Activated naive CD4-positive, alpha-beta T cell treated with anti-CD3 and anti-CD28 coated beads for 36 hours (primary cell): ENCODE measurements at regions of chr5 and their contacts with region 1.

Region 1: DNA sequence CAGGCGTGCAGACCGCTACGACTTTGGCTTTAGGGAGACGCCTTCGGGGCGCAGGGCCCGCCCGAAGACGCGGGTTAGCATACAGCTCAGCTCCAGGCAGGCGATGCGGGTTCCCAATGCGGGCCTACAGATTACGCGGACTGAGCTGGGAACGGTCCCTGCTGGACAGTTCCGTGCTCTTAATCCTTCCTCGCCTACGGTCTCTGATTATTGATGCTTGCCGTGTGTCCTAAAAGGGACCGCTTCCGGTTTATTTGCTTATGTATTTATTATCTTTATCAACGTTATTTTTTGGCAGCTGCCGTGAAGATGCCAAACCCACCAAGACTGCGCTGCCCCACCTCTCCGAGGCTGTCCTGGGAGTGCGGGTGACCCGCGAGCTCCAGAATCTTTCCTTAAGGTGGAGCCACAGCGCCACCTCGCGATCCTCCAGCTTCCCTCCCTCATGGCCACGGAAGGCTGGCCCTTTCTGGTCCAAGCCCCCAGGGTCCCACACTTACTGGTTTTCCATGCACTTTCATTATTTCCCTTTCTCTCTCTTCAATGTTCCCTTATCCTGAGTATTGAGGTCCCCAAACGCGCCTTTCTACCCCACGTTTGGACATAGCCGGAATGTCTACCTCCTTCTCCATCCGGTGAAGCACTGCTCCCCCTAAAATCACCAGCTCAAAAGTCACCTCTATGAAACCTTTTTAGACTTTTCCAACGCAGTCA is 7.0 kb upstream of the EBF1 start:
- DNase-seq: peak; percentile 80
- H3K4me3 Mint-ChIP-seq: peak overlapping the region; percentile 71
- H3K27ac Mint-ChIP-seq: no peak overlapping the region
- H3K4me1 Mint-ChIP-seq: peaks cover 24% of the 10 kb centered on the region
- H3K27me3 Mint-ChIP-seq: peaks cover 45% of the 10 kb centered on the region

Region 2: GRCh38 chr5:158174918-158175851 is 931.5 kb before region 1 on chr5:
- CTCF ChIA-PET with region 1: interaction called, 14 read pairs
- intact Hi-C with region 1: loop called (anchors 1 kb)
- DNase-seq: peak; percentile 75
- H3K4me3 Mint-ChIP-seq: no peak overlapping the region
- H3K27ac Mint-ChIP-seq: no peak overlapping the region
- H3K4me1 Mint-ChIP-seq: no peaks in the 10 kb centered on the region
- H3K27me3 Mint-ChIP-seq: no peaks in the 10 kb centered on the region

Region 3: GRCh38 chr5:158701406-158702177 is 405.1 kb before region 1 on chr5:
- CTCF ChIA-PET with region 1: interaction called, 14 read pairs
- intact Hi-C with region 1: no loop called
- DNase-seq: no peak
- H3K4me3 Mint-ChIP-seq: no peak overlapping the region
- H3K27ac Mint-ChIP-seq: no peak overlapping the region
- H3K4me1 Mint-ChIP-seq: no peaks in the 10 kb centered on the region
- H3K27me3 Mint-ChIP-seq: no peaks in the 10 kb centered on the region

Region 4: DNA sequence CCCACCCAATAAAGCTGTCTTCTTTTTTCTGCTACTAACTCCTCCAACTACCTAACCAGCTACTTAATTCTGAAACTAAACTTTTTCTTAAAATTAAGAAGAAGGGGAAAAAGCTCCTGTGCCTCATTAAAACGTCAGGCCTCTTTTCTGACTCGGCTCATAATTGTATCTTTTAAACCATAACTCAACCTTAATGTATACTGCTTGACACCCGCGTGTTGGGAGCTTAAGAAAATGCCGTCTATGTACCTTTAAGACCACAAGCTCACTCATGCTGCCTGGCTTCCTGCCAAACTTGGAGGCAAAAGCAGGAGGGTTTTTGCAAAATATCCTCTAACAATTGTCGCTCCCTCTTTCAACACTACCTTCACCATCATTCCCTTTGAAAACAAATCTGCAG is 12.0 kb before region 1 on chr5:
- CTCF ChIA-PET with region 1: interaction called, 10 read pairs
- intact Hi-C with region 1: no loop called
- DNase-seq: peak; percentile 77
- H3K4me3 Mint-ChIP-seq: no peak overlapping the region
- H3K27ac Mint-ChIP-seq: peak overlapping the region; percentile 48
- H3K4me1 Mint-ChIP-seq: peaks cover 26% of the 10 kb centered on the region
- H3K27me3 Mint-ChIP-seq: peaks cover 28% of the 10 kb centered on the region

Region 5: DNA sequence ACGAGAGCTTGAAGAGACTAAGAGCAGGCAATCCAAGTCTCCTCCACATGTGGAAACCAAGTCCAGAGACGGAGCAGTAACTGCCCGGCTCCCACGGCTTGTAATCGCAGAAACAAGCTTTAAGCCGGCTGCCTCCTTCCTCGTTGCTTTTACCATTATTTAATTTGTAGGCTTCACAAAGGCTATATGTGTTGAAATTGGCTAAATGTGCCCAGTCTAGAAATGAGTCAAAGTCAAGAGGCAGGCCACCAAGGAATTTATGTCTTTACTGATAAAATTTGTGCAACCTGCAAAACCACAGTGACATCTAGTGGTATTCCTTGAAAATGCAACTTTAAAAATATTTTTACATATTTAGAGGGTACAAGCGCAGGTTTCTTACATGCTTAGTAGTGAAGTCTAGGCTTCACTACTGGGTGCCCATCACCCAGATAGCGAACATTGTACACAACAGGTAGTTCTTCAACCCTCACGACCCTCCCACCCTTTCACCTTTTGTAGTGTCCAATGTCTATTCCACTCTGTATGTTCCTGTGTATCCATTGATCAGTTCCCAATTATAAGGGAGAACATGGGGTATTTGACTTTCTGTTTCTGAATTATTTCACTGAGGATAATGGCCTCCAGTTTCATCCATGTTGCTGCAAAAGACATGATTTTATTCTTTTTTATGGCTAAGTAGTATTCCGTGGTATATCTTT is 26.5 kb after region 1 on chr5:
- CTCF ChIA-PET with region 1: interaction called, 15 read pairs
- intact Hi-C with region 1: loop called (anchors 1 kb)
- DNase-seq: no peak
- H3K4me3 Mint-ChIP-seq: no peak overlapping the region
- H3K27ac Mint-ChIP-seq: no peak overlapping the region
- H3K4me1 Mint-ChIP-seq: no peaks in the 10 kb centered on the region
- H3K27me3 Mint-ChIP-seq: peaks cover 3% of the 10 kb centered on the region